ENCODE measurements at regions of chr16 and their contacts with region 1.

Region 1: GRCh38 chr16:12688951-12689850 is 114.5 kb downstream of the CPPED1 start:
- DNase-seq: no peak
- H3K4me3 ChIP-seq: no peak overlapping the region
- H3K27ac ChIP-seq: no peak overlapping the region
- H3K4me1 ChIP-seq: no peaks in the 10 kb centered on the region
- H3K27me3 ChIP-seq: no peaks in the 10 kb centered on the region
- CTCF ChIP-seq: no peak

Region 2: GRCh38 chr16:12289175-12290063 is 399.8 kb before region 1 on chr16:
- CTCF ChIA-PET with region 1: no interaction called
- POLR2A ChIA-PET with region 1: no interaction called
- intact Hi-C with region 1: no loop called
- DNase-seq: no peak
- H3K4me3 ChIP-seq: no peak overlapping the region
- H3K27ac ChIP-seq: no peak overlapping the region
- H3K4me1 ChIP-seq: no peaks in the 10 kb centered on the region
- H3K27me3 ChIP-seq: no peaks in the 10 kb centered on the region
- CTCF ChIP-seq: no peak

Region 3: DNA sequence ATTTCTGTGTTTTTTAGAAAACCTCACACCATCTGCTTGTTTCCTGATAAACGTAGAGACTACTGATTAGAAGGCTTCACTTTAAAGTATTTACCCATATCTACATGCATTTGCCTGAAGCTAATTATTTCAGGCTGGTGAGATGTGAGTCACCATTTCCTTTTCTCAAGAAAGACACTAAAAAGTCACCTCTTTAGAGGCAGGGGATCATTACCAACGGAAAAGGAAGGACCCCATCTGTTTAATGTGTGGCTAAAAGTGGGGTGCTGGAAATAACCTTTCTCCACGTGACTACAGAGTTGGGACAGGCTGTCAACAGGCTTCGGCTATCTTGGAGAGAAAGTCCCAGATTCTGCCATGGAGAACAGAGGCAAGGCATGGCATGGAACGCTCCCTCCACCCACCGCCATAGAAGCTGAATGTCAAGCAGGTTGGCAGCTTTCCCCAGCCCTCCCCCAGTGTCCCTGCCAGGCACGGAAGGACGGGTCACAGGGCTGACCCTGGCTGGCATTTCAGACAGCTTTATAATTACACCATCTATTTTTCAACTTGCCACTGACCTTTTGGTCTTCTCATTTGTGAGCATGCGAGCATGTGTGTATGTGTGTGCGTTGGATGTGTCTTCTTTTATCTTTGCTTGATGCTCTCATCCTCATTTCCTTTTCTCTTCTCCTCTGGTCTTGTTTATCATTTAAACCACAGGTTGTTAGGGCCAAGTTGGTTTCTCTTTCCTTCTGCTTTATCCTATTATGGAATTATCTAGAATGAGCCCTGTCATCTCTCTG is 42.5 kb before region 1 on chr16:
- CTCF ChIA-PET with region 1: no interaction called
- POLR2A ChIA-PET with region 1: no interaction called
- intact Hi-C with region 1: no loop called
- DNase-seq: peak in 1 of 2 experiments; percentile 58
- H3K4me3 ChIP-seq: no peak overlapping the region
- H3K27ac ChIP-seq: no peak overlapping the region
- H3K4me1 ChIP-seq: no peaks in the 10 kb centered on the region
- H3K27me3 ChIP-seq: no peaks in the 10 kb centered on the region
- CTCF ChIP-seq: no peak

Region 4: DNA sequence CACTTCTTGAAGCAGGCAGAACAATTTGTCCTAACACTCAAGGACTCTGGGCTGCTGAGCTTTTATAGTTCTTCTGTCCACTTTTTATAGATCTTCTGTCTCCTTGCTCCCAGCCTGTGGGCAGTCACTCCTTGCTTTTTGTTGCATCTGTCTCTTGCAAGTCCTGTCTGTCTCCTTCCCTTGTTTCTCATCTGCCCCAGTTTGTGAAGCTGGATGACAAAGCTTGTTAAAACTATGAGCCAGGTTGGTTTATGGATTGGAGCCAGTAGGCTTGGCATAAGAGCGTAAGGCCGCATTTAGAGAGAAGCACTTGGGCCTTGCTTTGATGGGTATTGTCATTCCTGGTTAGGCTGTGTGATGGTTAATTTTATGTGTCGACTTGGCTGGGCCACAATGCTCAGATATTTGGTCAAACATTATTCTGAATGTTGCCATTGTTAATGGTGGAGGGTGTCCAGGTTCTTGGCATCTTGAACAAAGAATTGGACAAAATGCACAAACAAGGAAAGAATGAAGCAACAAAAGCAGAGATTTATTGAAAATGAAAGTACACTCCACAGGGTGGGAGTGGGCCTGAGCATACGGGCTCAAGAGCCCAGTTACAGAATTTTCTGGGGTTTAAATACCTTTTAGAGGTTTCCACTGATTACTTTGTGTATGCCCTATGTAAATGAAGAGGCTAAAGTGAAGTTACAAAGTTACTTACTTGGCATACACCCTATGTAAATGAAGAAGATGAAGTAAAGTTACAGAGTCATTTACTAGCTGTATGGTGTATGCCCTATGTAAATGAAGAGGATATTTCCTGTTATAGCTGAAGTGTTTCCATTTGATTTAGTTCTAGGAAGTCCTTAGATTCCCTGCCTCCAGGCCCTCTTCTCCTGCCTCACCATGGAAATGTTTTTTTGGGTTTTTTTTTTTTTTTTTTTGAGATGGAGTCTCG is 122.5 kb after region 1 on chr16:
- CTCF ChIA-PET with region 1: no interaction called
- POLR2A ChIA-PET with region 1: interaction called, 14 read pairs
- intact Hi-C with region 1: no loop called
- DNase-seq: no peak
- H3K4me3 ChIP-seq: no peak overlapping the region
- H3K27ac ChIP-seq: no peak overlapping the region
- H3K4me1 ChIP-seq: peaks cover 12% of the 10 kb centered on the region
- H3K27me3 ChIP-seq: no peaks in the 10 kb centered on the region
- CTCF ChIP-seq: no peak

Region 5: DNA sequence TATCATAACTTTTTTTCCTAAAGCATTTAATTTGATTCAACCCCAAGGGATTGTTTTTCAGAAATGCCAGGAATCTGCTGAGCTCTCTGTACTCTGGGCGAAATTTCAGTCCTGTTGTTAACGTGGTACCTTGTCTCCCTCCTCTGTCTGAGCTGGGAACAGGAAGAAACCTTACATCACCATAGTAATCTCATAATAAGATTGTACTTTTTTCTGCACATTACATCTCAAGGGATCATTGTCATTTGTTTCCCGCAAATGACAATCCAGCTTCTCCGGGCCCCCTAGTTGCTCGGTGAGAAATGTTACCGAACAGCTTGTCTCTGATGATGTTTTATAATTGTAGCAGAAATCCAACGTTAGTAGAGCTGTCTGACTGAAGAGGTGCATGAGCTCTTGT is 1078.0 kb after region 1 on chr16:
- CTCF ChIA-PET with region 1: no interaction called
- POLR2A ChIA-PET with region 1: interaction called, 13 read pairs
- intact Hi-C with region 1: no loop called
- DNase-seq: peak in 1 of 2 experiments; percentile 11
- H3K4me3 ChIP-seq: no peak overlapping the region
- H3K27ac ChIP-seq: no peak overlapping the region
- H3K4me1 ChIP-seq: no peaks in the 10 kb centered on the region
- H3K27me3 ChIP-seq: peaks cover 73% of the 10 kb centered on the region
- CTCF ChIP-seq: 0 out of 2 replicates have a peak, but pooled peaks have one; percentile 33